ENCODE measurements at regions of chr2 and their contacts with region 1.

Region 1: DNA sequence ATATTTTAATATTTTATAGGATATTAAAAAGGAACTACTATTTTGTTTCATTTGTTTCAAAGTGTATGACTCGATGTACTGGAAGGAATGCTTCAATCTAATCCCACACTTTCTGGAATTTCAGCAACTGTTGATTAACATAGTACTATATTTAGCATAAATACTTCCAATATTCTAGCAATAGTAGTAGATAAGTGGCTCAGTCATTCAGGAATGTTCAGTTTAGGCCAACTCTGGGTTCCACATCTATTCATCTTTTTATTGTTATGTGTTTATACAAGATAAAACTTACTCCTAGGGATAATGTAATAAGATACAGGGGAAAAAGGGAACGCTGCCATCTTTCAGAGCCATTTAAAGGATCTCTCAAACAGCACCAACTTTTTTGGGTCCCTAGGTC is 22.3 kb upstream of the ORC2 start:
- DNase-seq: no peak
- H3K4me3 ChIP-seq: no peak overlapping the region
- H3K27ac ChIP-seq: no peak overlapping the region
- H3K4me1 ChIP-seq: no peaks in the 10 kb centered on the region
- H3K27me3 ChIP-seq: no peaks in the 10 kb centered on the region
- CTCF ChIP-seq: no peak

Region 2: GRCh38 chr2:200188876-200189275 is 796.9 kb before region 1 on chr2:
- CTCF ChIA-PET with region 1: no interaction called
- POLR2A ChIA-PET with region 1: interaction called, 11 read pairs
- intact Hi-C with region 1: no loop called
- DNase-seq: no peak
- H3K4me3 ChIP-seq: no peak overlapping the region
- H3K27ac ChIP-seq: no peak overlapping the region
- H3K4me1 ChIP-seq: no peaks in the 10 kb centered on the region
- H3K27me3 ChIP-seq: no peaks in the 10 kb centered on the region
- CTCF ChIP-seq: no peak

Region 3: DNA sequence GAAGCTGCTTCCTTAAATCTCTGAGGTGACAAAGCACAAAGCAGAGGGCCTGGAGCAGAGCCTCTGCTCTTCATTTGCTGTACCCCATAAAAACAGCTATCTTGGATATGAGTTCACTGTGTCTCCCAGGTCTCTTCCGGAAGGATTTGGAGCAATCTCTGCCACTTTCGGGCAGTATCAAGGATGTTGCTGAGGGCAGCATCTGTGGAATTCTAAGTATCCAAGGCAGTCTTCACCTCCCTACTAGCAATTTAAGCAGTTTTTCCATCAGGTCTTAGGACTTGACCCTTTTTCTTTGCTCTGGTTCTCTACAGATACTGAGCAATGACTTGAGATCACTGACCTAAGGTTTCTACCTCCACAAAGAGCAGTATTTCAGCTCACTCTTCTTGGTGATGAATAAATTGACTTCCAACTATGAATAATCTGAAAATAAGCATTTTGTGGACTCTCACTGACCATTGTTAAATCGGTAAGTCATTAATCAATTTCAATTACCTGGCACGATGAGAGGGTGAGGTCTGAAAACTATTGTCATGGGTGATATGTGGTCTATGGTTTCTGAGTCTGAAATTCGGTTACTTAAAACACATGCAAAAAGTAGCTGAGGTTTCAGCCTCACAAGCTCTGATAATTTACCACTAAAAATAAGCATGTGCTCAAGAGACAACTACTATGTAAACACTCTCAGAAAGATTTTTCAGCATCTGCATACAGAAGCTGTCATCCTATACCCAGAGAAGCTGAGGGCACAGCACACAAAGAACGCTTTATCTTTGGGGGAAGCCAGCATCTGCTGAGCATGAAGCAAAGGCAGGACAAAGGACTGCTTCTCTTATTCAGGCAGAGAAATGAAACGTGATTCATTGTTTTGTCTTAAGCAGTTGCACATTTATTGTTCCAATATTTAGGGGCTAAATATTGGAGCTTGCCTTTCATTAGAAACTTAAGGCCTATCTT is 711.4 kb before region 1 on chr2:
- CTCF ChIA-PET with region 1: no interaction called
- POLR2A ChIA-PET with region 1: no interaction called
- intact Hi-C with region 1: no loop called
- DNase-seq: no peak
- H3K4me3 ChIP-seq: no peak overlapping the region
- H3K27ac ChIP-seq: no peak overlapping the region
- H3K4me1 ChIP-seq: no peaks in the 10 kb centered on the region
- H3K27me3 ChIP-seq: no peaks in the 10 kb centered on the region
- CTCF ChIP-seq: no peak

Region 4: DNA sequence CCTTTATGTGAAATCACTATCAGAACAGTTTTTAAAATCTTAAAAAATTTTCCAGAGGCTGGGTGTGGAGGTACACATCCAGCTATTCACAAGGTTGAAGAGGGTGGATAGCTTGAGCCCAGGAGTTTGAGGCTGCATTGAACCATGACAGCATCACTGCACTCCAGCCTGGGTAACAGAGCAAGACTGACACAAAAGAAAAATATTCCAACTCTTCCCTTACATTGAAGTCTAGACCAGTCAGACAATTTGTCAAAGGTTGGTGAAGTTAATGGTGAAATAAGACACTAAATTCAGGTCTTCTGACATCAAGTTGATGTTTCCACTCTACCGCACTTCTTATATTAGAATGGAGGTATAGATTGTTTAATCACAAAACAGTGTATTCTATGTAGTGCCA is 32.8 kb after region 1 on chr2:
- CTCF ChIA-PET with region 1: no interaction called
- POLR2A ChIA-PET with region 1: no interaction called
- intact Hi-C with region 1: no loop called
- DNase-seq: no peak
- H3K4me3 ChIP-seq: no peak overlapping the region
- H3K27ac ChIP-seq: no peak overlapping the region
- H3K4me1 ChIP-seq: no peaks in the 10 kb centered on the region
- H3K27me3 ChIP-seq: no peaks in the 10 kb centered on the region
- CTCF ChIP-seq: no peak

Region 5: DNA sequence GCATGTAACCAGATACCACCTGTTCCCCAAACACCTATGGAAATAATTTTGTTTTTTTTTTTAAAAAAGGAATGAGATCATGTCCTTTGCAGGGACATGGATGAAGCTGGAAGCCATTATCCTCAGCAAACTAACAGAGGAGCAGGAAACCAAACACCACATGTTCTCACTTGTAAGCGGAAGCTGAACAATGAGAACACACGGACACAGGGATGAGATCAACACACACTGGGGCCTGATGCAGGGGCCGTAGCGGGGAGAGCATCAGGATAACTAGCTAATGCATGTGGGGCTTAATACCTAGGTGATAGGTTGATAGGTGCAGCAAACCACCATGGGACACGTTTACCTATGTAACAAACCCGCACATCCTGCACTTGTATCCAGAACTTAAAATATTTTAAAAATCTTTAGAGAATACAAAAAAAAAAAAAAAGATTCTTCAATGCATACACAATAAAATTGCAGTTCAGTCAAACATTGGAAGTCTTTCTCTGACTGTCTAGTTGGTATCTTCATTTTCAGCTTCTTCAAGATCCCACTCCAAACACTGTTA is 185.5 kb after region 1 on chr2:
- CTCF ChIA-PET with region 1: interaction called, 10 read pairs
- POLR2A ChIA-PET with region 1: no interaction called
- intact Hi-C with region 1: no loop called
- DNase-seq: no peak
- H3K4me3 ChIP-seq: no peak overlapping the region
- H3K27ac ChIP-seq: no peak overlapping the region
- H3K4me1 ChIP-seq: no peaks in the 10 kb centered on the region
- H3K27me3 ChIP-seq: no peaks in the 10 kb centered on the region
- CTCF ChIP-seq: no peak

Measured in PC-9 (cell line).